ENCODE measurements at regions of chr1 and their contacts with region 1.

Region 1: GRCh38 chr1:19643602-19644394 is at the start of gene NBL1:
- DNase-seq: peak; percentile 74 to 87 (median 86)
- ATAC-seq: peak; percentile 38 to 84 (median 78)
- H3K4me3 ChIP-seq: peak within 1 kb of the TSS; percentile 24 to 98 (median 81)
- H3K27ac ChIP-seq: peak within 1 kb of the TSS; percentile 81 to 97 (median 92)
- H3K4me1 ChIP-seq: peaks cover 5 to 53% (median 31%) of the 10 kb centered on the region in 12 donors
- H3K27me3 ChIP-seq: peaks cover 0 to 29% (median 0%) of the 10 kb centered on the region in 9 donors
- CTCF ChIP-seq: peak in 1 of 12 donors; percentile 2
- POLR2A ChIP-seq: no peak
- total RNA-seq, gene NBL1: 19.3 to 61.4 (median 33.1) TPM

Region 2: DNA sequence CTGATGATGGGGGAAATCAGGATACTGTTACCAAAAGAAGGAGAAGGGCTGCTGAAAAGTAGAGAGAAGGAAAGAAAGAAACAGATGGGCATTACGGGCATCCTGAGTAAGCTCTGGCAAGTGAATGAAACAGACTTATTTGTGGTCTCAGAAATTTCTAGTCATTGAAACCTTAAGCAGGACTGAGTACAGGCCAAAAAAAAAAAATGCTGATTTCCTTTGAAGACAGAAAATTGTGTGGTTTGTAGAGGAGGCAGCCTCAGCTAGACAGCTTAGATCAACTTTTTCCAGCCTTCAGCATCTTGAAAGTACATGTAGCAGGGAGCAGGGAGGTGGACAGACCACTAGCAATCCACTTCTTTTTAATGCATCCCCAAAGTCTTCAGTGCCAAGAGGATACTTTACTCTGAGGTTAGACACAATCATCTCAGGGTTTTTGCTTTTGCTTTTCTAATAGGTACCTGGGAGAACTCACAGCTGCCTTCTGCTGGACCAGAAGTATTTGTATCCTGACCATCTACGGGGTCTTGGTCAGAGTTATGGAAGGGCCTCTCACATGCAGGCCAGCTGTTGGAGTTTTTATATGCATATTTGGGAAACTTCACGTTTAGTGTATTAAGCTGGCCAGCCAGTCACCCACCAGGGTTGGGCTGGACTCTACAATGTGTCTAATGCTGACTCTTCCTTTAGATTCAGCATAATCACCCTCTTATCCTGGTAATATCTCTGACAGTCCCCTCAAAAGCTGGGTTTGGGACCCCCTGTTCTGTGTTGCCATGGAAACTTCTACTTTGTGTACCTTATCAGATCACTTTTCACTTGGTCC is 147.8 kb before region 1 on chr1:
- intact Hi-C with region 1: loop called in 3 of 10 experiments (anchors 5 kb)
- DNase-seq: no peak
- ATAC-seq: peak in 3 of 4 donors; percentile 12 to 30 (median 22)
- H3K4me3 ChIP-seq: no peak overlapping the region
- H3K27ac ChIP-seq: peak overlapping the region; percentile 12 to 95 (median 78)
- H3K4me1 ChIP-seq: peaks cover 0 to 27% (median 22%) of the 10 kb centered on the region in 12 donors
- H3K27me3 ChIP-seq: no peaks in the 10 kb centered on the region
- CTCF ChIP-seq: no peak
- POLR2A ChIP-seq: no peak

Region 3: DNA sequence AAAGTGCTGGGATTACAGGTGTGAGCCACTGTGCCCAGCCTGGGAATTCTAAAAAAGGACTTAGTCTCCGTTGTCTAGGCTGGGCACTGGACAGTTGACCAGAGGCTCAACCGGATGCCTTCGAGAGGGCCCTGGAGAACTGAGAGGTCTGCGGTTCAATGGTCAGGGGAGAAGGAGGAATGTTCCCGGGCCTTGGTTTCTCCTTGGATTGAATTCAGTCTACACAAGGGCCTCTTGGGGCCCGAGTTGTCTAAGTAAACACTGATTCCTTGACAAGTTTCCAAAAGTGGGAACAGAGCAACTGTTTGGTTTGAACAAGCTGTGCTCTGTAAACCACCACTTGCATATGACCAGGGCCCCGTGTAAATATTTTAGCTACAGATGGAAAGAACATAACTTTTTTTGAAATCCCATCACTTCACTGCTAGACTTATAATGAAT is 129.4 kb before region 1 on chr1:
- intact Hi-C with region 1: loop called in 1 of 10 experiments (anchors 5 kb)
- DNase-seq: peak; percentile 54 to 73 (median 68)
- ATAC-seq: peak; percentile 84 to 88 (median 86)
- H3K4me3 ChIP-seq: no peak overlapping the region
- H3K27ac ChIP-seq: peak overlapping the region in 11 of 12 donors; percentile 36 to 85 (median 54)
- H3K4me1 ChIP-seq: peaks cover 0 to 37% (median 2%) of the 10 kb centered on the region in 12 donors
- H3K27me3 ChIP-seq: no peaks in the 10 kb centered on the region
- CTCF ChIP-seq: no peak
- POLR2A ChIP-seq: no peak

Region 4: GRCh38 chr1:19596714-19597495 is 46.9 kb before region 1 on chr1:
- intact Hi-C with region 1: loop called in 7 of 10 experiments (anchors 2 to 10 kb)
- DNase-seq: peak; percentile 97 to 98 (median 98)
- ATAC-seq: peak; percentile 90 to 95 (median 94)
- H3K4me3 ChIP-seq: peak overlapping the region; percentile 63 to 95 (median 88)
- H3K27ac ChIP-seq: peak overlapping the region; percentile 91 to 98 (median 96)
- H3K4me1 ChIP-seq: peaks cover 0 to 51% (median 35%) of the 10 kb centered on the region in 12 donors
- H3K27me3 ChIP-seq: no peaks in the 10 kb centered on the region
- CTCF ChIP-seq: no peak
- POLR2A ChIP-seq: peak in 1 of 2 donors; percentile 74

Measured in heart left ventricle (tissue), 16 donors.